ENCODE measurements at regions of chr19 and their contacts with region 1.

Region 1: GRCh38 chr19:3108775-3109174 is 14.6 kb downstream of the GNA11 start:
- DNase-seq: peak; percentile 82
- ATAC-seq: peak; percentile 76
- H3K4me3 ChIP-seq: no peak overlapping the region
- H3K4me3 Mint-ChIP-seq: no peak overlapping the region
- H3K27ac ChIP-seq: no peak overlapping the region
- H3K27ac Mint-ChIP-seq: peak overlapping the region; percentile 17
- H3K4me1 ChIP-seq: peaks cover 5 to 14% of the 10 kb centered on the region in 2 donors
- H3K4me1 Mint-ChIP-seq: peaks cover 11% of the 10 kb centered on the region
- H3K27me3 ChIP-seq: no peaks in the 10 kb centered on the region
- H3K27me3 Mint-ChIP-seq: no peaks in the 10 kb centered on the region
- CTCF ChIP-seq: peak; percentile 88

Region 2: GRCh38 chr19:2887391-2887914 is 221.3 kb before region 1 on chr19:
- CTCF ChIA-PET with region 1: interaction called, 7 read pairs
- POLR2A ChIA-PET with region 1: no interaction called
- intact Hi-C with region 1: loop called (anchors 1 kb)
- DNase-seq: peak; percentile 71
- ATAC-seq: peak; percentile 58
- H3K4me3 ChIP-seq: no peak overlapping the region
- H3K4me3 Mint-ChIP-seq: peak overlapping the region; percentile 27
- H3K27ac ChIP-seq: peak overlapping the region in 1 of 2 donors; percentile 72
- H3K27ac Mint-ChIP-seq: peak overlapping the region; percentile 53
- H3K4me1 ChIP-seq: peaks cover 3 to 16% of the 10 kb centered on the region in 2 donors
- H3K4me1 Mint-ChIP-seq: peaks cover 18% of the 10 kb centered on the region
- H3K27me3 ChIP-seq: no peaks in the 10 kb centered on the region
- H3K27me3 Mint-ChIP-seq: peaks cover 4% of the 10 kb centered on the region
- CTCF ChIP-seq: peak; percentile 80

Region 3: GRCh38 chr19:3035542-3036118 is 73.1 kb before region 1 on chr19:
- CTCF ChIA-PET with region 1: interaction called, 11 read pairs
- POLR2A ChIA-PET with region 1: no interaction called
- intact Hi-C with region 1: no loop called
- DNase-seq: peak; percentile 97
- ATAC-seq: peak; percentile 91
- H3K4me3 ChIP-seq: peak overlapping the region; percentile 66 to 93 (median 72)
- H3K4me3 Mint-ChIP-seq: peak overlapping the region; percentile 87
- H3K27ac ChIP-seq: peak overlapping the region; percentile 65 to 78
- H3K27ac Mint-ChIP-seq: peak overlapping the region; percentile 92
- H3K4me1 ChIP-seq: peaks cover 12 to 19% of the 10 kb centered on the region in 2 donors
- H3K4me1 Mint-ChIP-seq: peaks cover 21% of the 10 kb centered on the region
- H3K27me3 ChIP-seq: no peaks in the 10 kb centered on the region
- H3K27me3 Mint-ChIP-seq: peaks cover 10% of the 10 kb centered on the region
- CTCF ChIP-seq: no peak

Region 4: DNA sequence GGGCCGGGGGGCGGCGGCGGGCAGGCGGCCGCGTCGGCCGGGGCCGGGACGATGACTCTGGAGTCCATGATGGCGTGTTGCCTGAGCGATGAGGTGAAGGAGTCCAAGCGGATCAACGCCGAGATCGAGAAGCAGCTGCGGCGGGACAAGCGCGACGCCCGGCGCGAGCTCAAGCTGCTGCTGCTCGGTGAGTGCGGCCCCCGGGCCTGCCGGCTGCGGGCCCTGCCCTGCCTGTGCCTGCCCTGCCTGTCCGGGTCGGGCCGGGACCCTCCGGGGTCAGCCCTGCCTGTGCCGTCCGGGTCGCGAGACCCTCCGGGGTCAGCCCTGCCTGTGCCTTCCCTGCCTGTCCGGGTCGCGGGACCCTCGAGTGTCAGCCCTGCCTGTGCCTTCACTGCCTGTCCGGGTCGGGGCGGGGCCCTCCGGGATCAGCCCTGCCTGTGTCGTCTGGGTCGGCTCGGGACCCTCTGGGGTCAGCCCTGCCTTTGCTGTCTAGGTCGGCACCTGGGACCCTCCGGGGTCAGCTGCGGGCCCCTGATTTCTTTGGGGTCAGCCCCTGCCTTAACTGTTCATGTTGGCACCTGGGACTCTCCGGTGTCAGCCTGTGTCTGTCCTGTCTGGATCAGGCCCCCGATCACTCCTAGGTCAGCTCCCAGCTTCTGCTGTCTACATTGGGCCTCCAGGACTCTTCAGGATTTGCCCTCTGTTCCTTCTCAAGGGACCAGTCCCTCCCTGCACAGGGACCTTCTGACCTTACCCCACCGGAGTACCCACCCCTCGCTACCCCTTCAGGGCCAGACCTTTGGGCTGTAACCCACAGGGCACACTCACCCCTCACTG is 14.0 kb before region 1 on chr19:
- CTCF ChIA-PET with region 1: interaction called, 13 read pairs
- POLR2A ChIA-PET with region 1: no interaction called
- intact Hi-C with region 1: no loop called
- DNase-seq: peak; percentile 70
- ATAC-seq: peak; percentile 37
- H3K4me3 ChIP-seq: peak overlapping the region in 4 of 5 experiments; percentile 41 to 71 (median 58)
- H3K4me3 Mint-ChIP-seq: peak overlapping the region; percentile 84
- H3K27ac ChIP-seq: no peak overlapping the region
- H3K27ac Mint-ChIP-seq: peak overlapping the region; percentile 46
- H3K4me1 ChIP-seq: peaks cover 35 to 46% of the 10 kb centered on the region in 2 donors
- H3K4me1 Mint-ChIP-seq: peaks cover 28% of the 10 kb centered on the region
- H3K27me3 ChIP-seq: peaks cover 0 to 24% (median 10%) of the 10 kb centered on the region in 4 experiments
- H3K27me3 Mint-ChIP-seq: peaks cover 8% of the 10 kb centered on the region
- CTCF ChIP-seq: no peak

Region 5: GRCh38 chr19:3163230-3163886 is 54.6 kb after region 1 on chr19:
- CTCF ChIA-PET with region 1: interaction called, 11 read pairs
- POLR2A ChIA-PET with region 1: no interaction called
- intact Hi-C with region 1: loop called (anchors 1 kb)
- DNase-seq: peak; percentile 84
- ATAC-seq: peak; percentile 94
- H3K4me3 ChIP-seq: no peak overlapping the region
- H3K4me3 Mint-ChIP-seq: peak overlapping the region; percentile 62
- H3K27ac ChIP-seq: no peak overlapping the region
- H3K27ac Mint-ChIP-seq: peak overlapping the region; percentile 63
- H3K4me1 ChIP-seq: peaks cover 11 to 23% of the 10 kb centered on the region in 2 donors
- H3K4me1 Mint-ChIP-seq: peaks cover 19% of the 10 kb centered on the region
- H3K27me3 ChIP-seq: no peaks in the 10 kb centered on the region
- H3K27me3 Mint-ChIP-seq: no peaks in the 10 kb centered on the region
- CTCF ChIP-seq: peak; percentile 97